ENCODE measurements at regions of chr3 and their contacts with region 1.

Region 1: DNA sequence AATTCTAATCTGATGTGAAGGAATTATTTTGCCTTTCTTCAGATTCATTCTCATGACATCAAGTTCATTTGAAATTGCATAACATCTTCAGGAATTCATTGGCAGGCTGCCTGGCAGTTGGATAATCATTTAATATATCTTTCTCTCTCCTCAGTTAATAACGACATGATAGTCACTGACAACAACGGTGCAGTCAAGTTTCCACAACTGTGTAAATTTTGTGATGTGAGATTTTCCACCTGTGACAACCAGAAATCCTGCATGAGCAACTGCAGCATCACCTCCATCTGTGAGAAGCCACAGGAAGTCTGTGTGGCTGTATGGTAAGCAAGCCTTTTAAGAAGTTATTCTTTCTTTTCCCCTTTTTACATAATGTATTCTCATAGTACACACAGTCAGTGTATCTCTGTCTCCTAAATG is 38.2 kb downstream of the TGFBR2 start:
- DNase-seq: peak; percentile 76
- H3K4me3 Mint-ChIP-seq: peak overlapping the region; percentile 56
- H3K27ac Mint-ChIP-seq: peak overlapping the region; percentile 98
- H3K4me1 Mint-ChIP-seq: peaks cover 92% of the 10 kb centered on the region
- H3K27me3 Mint-ChIP-seq: no peaks in the 10 kb centered on the region

Region 2: GRCh38 chr3:30227571-30228301 is 416.9 kb before region 1 on chr3:
- CTCF ChIA-PET with region 1: no interaction called
- intact Hi-C with region 1: no loop called
- DNase-seq: no peak
- H3K4me3 Mint-ChIP-seq: no peak overlapping the region
- H3K27ac Mint-ChIP-seq: peak overlapping the region; percentile 28
- H3K4me1 Mint-ChIP-seq: peaks cover 13% of the 10 kb centered on the region
- H3K27me3 Mint-ChIP-seq: no peaks in the 10 kb centered on the region

Region 3: DNA sequence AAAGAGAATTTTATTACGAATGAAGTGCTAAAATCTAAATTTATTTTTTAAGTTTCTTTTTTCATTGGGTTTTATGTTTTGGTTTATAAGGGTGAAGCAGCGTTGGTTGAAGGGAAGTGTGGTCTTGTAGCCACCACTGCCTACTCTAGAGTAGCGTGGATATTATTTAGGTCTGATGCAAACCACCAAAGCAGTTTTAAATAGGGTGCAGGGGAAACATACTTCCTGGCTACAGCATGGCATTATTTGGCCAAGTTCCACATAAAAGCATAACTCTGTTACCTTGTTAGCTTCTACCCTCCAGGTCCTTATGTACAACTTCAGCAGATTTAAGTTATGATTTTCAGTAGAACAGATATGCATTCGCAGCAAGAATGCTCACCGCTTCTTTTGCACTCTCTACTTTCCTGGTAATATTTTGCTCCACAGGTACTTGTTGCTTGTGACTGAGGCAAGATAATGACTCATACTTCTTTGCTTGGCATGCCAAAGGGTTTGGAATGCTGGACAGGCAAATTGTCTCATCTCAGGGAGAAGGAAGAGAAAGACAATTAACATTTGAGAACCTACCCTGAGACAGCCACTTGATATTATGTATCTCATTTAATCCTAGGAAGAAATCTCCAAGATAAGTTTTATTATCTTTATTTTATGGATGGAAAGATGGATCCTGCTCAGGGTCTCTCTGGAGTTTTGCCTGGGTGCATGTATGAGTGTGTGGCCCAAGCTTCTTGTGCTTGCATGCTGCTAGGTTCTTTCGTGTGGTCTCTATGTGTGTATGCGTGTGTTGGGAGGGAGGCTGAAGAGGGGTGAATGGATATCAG is 32.8 kb before region 1 on chr3:
- CTCF ChIA-PET with region 1: interaction called, 6 read pairs
- intact Hi-C with region 1: loop called (anchors 1 kb)
- DNase-seq: peak; percentile 25
- H3K4me3 Mint-ChIP-seq: peak overlapping the region; percentile 83
- H3K27ac Mint-ChIP-seq: peak overlapping the region; percentile 98
- H3K4me1 Mint-ChIP-seq: peaks cover 57% of the 10 kb centered on the region
- H3K27me3 Mint-ChIP-seq: no peaks in the 10 kb centered on the region

Region 4: GRCh38 chr3:30620402-30621360 is 23.9 kb before region 1 on chr3:
- CTCF ChIA-PET with region 1: interaction called, 5 read pairs
- intact Hi-C with region 1: loop called (anchors 1 kb)
- DNase-seq: peak; percentile 73
- H3K4me3 Mint-ChIP-seq: peak overlapping the region; percentile 58
- H3K27ac Mint-ChIP-seq: peak overlapping the region; percentile 98
- H3K4me1 Mint-ChIP-seq: peaks cover 89% of the 10 kb centered on the region
- H3K27me3 Mint-ChIP-seq: no peaks in the 10 kb centered on the region

Region 5: DNA sequence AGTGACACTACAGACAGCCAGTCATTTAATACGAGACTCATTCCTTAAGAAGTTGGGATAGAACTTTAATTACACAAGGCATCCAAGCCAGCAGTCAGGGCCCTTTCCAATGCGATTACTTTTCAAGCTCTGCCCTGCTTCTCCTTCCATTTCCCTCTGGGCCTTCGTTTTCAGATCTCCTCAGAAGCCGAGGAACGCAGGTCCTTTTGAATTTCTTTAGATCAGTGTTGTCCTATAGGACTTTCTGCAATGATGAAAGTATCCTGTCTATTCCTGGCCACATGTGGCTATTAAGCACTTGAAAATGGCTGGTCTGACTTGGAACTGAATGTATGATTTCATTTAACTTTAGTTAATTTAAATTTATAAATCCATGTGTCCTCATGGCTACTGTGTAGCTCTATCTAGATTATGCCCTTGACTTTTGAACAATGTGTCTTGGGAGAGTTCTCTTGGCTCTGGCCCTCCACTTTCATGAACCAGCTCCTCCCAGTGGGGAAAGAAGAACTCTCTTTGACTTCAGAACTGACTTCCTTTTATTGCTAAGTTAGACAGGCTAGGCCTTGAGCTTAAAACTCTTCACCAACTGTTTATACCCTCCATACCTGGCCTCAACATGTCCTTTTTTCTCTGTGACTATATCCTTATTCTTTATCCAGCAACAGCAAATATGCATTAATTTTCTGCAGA is 15.6 kb before region 1 on chr3:
- CTCF ChIA-PET with region 1: interaction called, 3 read pairs
- intact Hi-C with region 1: loop called (anchors 1 kb)
- DNase-seq: peak; percentile 55
- H3K4me3 Mint-ChIP-seq: peak overlapping the region; percentile 53
- H3K27ac Mint-ChIP-seq: peak overlapping the region; percentile 98
- H3K4me1 Mint-ChIP-seq: peaks cover 91% of the 10 kb centered on the region
- H3K27me3 Mint-ChIP-seq: no peaks in the 10 kb centered on the region

Region 6: DNA sequence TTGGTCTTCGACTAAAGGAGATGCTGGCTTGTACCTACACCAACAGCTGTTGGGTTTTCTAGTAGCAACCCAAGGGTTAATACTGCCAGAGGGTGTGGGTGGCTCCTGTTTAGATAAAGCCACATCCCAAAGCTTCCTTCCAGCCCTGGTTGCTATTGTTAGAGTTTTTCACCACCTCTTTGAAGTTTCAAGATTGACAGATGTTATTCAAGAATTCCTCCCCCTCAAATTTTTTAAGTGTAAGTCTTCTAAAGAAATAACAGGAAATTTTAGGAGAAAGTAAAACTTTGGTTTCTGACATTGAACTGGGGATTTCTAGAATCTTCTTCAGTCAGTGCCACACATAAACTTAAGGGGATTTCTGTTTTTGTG is 22.7 kb after region 1 on chr3:
- CTCF ChIA-PET with region 1: interaction called, 6 read pairs
- intact Hi-C with region 1: loop called (anchors 1 kb)
- DNase-seq: peak; percentile 67
- H3K4me3 Mint-ChIP-seq: peak overlapping the region; percentile 15
- H3K27ac Mint-ChIP-seq: peak overlapping the region; percentile 93
- H3K4me1 Mint-ChIP-seq: peaks cover 95% of the 10 kb centered on the region
- H3K27me3 Mint-ChIP-seq: no peaks in the 10 kb centered on the region

Region 7: DNA sequence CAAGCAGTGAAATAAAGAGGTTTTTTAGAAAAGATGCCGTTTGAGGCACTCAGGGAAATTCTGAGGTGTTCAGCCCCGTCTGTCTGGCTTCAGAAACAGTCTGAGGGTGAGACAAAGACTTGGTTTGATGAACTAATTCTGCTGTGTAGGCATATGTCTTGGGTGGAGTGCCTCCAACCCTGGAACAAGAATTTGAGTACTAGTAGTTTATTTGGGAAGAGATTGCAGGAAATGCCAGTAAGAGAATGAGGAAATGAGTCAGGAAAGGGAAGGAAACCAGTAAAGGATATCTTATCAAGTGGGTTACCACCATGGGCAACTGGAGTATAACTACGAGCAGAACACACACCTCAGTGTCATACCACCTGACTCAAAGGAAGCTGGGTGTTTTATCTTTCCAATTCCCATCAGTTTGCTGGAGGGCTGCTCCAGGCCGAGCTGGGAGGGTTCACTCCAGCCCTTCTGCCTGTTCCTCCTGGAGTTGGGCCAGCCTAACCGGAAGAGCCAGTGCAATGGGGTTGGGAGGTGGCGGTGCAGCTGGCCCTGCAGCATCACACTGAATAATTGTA is 37.1 kb after region 1 on chr3:
- CTCF ChIA-PET with region 1: interaction called, 3 read pairs
- intact Hi-C with region 1: loop called (anchors 1 kb)
- DNase-seq: peak; percentile 45
- H3K4me3 Mint-ChIP-seq: peak overlapping the region; percentile 18
- H3K27ac Mint-ChIP-seq: peak overlapping the region; percentile 93
- H3K4me1 Mint-ChIP-seq: peaks cover 100% of the 10 kb centered on the region
- H3K27me3 Mint-ChIP-seq: no peaks in the 10 kb centered on the region

Region 8: DNA sequence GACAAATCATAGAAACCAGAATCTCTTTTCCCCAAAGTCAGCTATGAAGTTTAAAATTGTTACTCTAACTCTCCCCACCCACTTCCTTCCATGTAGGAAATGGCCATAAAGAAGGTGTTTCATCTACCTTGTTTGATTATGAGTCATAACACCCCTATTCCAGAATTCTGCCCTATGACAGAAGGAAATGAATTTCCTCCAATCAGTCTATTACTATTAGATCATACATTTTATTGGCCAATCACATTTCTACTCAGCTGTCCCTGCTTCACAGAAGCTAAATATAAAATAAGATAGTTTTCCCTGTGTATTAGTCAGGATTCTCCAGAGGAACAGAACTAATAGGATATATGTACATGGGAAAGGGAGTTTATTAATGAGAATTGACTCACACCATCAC is 63.9 kb after region 1 on chr3:
- CTCF ChIA-PET with region 1: no interaction called
- intact Hi-C with region 1: no loop called
- DNase-seq: no peak
- H3K4me3 Mint-ChIP-seq: no peak overlapping the region
- H3K27ac Mint-ChIP-seq: no peak overlapping the region
- H3K4me1 Mint-ChIP-seq: peaks cover 16% of the 10 kb centered on the region
- H3K27me3 Mint-ChIP-seq: no peaks in the 10 kb centered on the region

Region 9: GRCh38 chr3:30720586-30721313 is 76.1 kb after region 1 on chr3:
- CTCF ChIA-PET with region 1: no interaction called
- intact Hi-C with region 1: no loop called
- DNase-seq: no peak
- H3K4me3 Mint-ChIP-seq: no peak overlapping the region
- H3K27ac Mint-ChIP-seq: no peak overlapping the region
- H3K4me1 Mint-ChIP-seq: no peaks in the 10 kb centered on the region
- H3K27me3 Mint-ChIP-seq: no peaks in the 10 kb centered on the region

Region 10: DNA sequence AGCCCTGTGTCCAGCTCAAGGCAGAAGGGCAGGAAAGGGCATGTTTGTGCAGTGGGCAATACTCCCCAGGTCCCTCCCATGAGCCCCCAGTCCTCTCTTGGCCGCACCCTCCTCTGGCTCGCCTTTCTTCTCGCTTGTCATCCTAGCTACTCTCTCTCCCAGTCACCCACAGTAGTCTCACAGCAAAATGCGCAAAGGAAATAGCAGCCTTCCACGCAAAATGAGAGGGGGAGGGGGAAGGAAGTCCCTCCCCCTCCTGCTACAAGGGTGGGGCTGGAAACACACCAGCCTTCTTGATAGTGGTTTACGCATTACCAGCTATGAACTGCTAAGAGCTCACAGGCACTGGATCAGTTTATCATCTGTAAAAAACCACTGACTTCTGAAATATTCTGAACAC is 166.0 kb after region 1 on chr3:
- CTCF ChIA-PET with region 1: no interaction called
- intact Hi-C with region 1: no loop called
- DNase-seq: no peak
- H3K4me3 Mint-ChIP-seq: no peak overlapping the region
- H3K27ac Mint-ChIP-seq: no peak overlapping the region
- H3K4me1 Mint-ChIP-seq: no peaks in the 10 kb centered on the region
- H3K27me3 Mint-ChIP-seq: no peaks in the 10 kb centered on the region